Activated CD4-positive, alpha-beta T cell treated with anti-CD3 and anti-CD28 coated beads for 36 hours (primary cell): ENCODE measurements at regions of chr2 and their contacts with region 1.

Region 1: DNA sequence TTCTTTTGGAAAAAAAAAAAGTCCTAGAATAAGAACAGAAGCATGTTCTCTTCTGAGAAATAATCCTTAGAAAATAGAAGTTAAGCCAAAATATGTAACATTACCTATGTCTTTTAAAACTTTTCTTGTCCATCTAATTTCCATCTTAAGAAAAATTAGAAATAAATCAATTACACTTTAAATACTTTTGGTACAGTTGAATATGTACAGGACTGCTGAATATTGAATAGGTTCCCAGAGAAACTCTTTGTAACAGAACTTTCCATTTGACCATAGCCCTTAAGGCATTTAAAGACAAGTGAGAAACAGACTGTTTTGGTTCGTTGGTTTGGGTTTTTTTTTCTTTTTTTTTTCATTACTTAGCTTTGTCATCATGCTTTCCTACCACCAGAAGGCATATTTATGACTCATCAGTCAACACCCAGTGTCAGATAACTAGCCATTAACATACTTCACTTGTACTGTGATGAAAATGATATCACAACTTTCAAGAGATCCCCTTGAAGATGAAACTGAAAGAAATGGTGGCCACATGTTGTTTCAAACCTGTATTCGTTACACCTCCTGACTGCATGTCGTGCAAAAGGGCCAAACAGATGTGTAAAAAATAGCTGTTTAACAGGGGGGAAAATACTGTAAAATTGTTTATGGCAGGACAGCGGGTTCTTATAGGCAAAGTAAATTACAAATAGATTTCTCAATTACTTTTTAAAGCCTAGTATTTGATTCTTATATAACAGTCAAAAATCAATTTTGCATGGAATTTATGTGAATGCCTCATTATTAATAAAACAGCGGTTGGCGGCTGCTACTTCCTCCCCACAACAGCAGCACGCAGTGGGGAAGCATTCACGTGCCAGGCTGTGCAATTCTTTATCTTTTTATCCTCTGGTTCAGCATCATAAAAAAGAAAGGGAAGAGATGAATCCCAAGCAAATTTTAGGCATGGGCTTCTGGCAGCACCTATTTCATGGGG is 280.7 kb upstream of the HNRNPA3 start:
- DNase-seq: peak; percentile 42
- ATAC-seq: peak; percentile 96
- H3K4me3 Mint-ChIP-seq: no peak overlapping the region
- H3K27ac Mint-ChIP-seq: peak overlapping the region; percentile 59
- H3K4me1 Mint-ChIP-seq: peaks cover 10% of the 10 kb centered on the region
- H3K27me3 Mint-ChIP-seq: peaks cover 2% of the 10 kb centered on the region

Region 2: GRCh38 chr2:176643646-176644045 is 288.2 kb before region 1 on chr2:
- CTCF ChIA-PET with region 1: no interaction called
- POLR2A ChIA-PET with region 1: no interaction called
- intact Hi-C with region 1: no loop called
- DNase-seq: no peak
- ATAC-seq: no peak
- H3K4me3 Mint-ChIP-seq: no peak overlapping the region
- H3K27ac Mint-ChIP-seq: no peak overlapping the region
- H3K4me1 Mint-ChIP-seq: no peaks in the 10 kb centered on the region
- H3K27me3 Mint-ChIP-seq: peaks cover 56% of the 10 kb centered on the region

Region 3: GRCh38 chr2:176997074-176997791 is 65.4 kb after region 1 on chr2:
- CTCF ChIA-PET with region 1: no interaction called
- POLR2A ChIA-PET with region 1: no interaction called
- intact Hi-C with region 1: loop called (anchors 1 to 2 kb)
- DNase-seq: peak; percentile 43
- ATAC-seq: peak; percentile 87
- H3K4me3 Mint-ChIP-seq: no peak overlapping the region
- H3K27ac Mint-ChIP-seq: peak overlapping the region; percentile 51
- H3K4me1 Mint-ChIP-seq: peaks cover 30% of the 10 kb centered on the region
- H3K27me3 Mint-ChIP-seq: no peaks in the 10 kb centered on the region

Region 4: DNA sequence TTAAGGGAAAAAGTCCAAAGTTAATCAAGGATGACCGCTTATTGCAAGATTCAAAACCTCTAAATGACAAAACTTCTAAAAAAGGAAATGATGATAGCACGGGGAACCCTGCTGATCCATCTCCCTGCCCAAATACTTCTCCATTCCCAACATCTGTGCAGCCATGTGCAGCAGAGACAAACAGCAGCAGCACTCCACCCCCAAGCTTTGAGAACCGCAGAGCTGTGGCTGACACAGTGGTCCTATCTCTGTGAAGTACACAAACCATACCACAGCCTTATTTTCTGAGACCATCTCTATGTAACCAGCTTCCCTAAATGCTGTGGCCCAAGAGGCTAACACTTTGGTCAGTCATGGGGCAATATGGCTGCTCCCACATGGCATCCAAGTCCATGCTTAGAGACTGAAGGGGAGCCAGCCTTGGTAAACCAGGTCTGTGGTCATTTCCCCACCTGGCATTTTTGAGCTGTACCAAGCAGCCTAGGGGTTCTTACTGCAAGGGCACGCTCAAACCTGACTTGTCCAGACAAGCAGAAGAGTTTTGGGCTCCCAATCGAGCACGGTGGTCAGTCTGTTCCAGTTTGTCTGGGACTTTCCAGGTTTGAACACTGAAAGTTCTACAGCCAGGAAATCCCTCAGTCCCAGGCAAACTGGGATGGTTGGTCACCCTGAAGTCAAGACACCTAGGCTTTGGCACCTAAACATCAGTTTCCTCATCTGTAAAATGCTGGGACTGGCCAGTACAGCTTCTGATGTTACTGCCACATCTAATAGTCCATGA is 349.7 kb after region 1 on chr2:
- CTCF ChIA-PET with region 1: no interaction called
- POLR2A ChIA-PET with region 1: no interaction called
- intact Hi-C with region 1: no loop called
- DNase-seq: no peak
- ATAC-seq: no peak
- H3K4me3 Mint-ChIP-seq: no peak overlapping the region
- H3K27ac Mint-ChIP-seq: no peak overlapping the region
- H3K4me1 Mint-ChIP-seq: peaks cover 9% of the 10 kb centered on the region
- H3K27me3 Mint-ChIP-seq: no peaks in the 10 kb centered on the region

Region 5: DNA sequence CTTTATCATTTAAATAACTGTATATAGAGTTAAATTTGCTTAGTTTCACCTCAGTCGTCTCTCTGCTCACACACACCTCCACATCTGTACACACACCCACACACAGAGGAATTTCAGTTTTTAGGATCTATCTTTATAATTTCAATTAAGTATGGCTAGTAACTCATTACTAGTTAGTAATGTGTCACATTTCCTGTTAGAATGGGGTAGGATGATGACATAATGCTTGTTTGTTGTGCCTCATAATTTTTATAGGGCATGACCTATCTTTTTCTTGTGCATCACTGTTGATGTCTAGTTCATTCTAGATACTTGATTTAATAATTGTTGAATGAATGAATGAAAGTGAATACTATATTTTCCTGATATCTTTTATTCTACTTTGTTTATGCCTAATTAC is 569.3 kb after region 1 on chr2:
- CTCF ChIA-PET with region 1: no interaction called
- POLR2A ChIA-PET with region 1: no interaction called
- intact Hi-C with region 1: no loop called
- DNase-seq: no peak
- ATAC-seq: peak; percentile 73
- H3K4me3 Mint-ChIP-seq: no peak overlapping the region
- H3K27ac Mint-ChIP-seq: no peak overlapping the region
- H3K4me1 Mint-ChIP-seq: peaks cover 6% of the 10 kb centered on the region
- H3K27me3 Mint-ChIP-seq: no peaks in the 10 kb centered on the region